ENCODE measurements at regions of chr10 and their contacts with region 1.

Region 1: GRCh38 chr10:93080350-93081046 is 6.8 kb downstream of the CYP26A1 start:
- H3K4me3 Mint-ChIP-seq: no peak overlapping the region
- H3K27ac Mint-ChIP-seq: no peak overlapping the region
- H3K4me1 Mint-ChIP-seq: peaks cover 5% of the 10 kb centered on the region
- H3K27me3 Mint-ChIP-seq: peaks cover 66% of the 10 kb centered on the region

Region 2: DNA sequence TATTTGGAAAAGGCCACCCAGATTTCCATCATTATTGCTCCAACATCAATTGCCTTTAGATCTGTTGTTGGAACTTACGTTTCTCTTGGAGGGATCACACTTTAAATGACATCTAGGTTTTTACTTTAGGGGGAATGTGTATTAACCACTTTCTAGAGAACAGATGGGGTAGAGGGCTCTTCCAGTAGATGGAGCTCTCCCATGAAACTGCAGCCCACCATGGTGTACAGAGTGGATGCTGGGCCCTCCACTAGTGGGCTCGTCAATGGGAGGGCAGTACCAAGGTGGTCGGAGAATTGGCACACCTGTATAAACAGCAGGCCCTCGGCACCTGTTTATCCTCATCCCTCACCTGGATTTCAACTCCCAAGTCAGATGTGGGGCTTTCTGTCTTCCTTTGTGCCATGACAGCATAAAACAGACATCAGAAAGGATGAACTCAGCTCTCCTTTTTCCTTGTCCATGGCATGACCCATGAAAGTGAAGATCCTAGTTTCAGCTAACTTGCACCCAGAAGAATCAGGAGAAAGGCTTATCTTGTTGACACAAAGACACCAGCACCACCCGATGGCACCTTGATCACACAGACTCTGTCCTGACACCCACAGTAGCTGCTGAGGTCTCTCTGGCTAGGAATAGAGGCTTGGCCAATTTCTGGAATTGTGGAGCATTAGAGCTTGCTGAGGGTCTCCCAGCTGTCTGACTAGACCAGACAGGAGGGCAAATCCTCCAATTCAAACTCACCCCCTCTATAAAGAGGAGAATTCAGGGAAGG is 143.7 kb after region 1 on chr10:
- intact Hi-C with region 1: loop called (anchors 2 kb)
- H3K4me3 Mint-ChIP-seq: no peak overlapping the region
- H3K27ac Mint-ChIP-seq: no peak overlapping the region
- H3K4me1 Mint-ChIP-seq: no peaks in the 10 kb centered on the region
- H3K27me3 Mint-ChIP-seq: peaks cover 47% of the 10 kb centered on the region

Region 3: GRCh38 chr10:93288654-93289634 is 208.4 kb after region 1 on chr10:
- intact Hi-C with region 1: loop called (anchors 1 kb)
- H3K4me3 Mint-ChIP-seq: no peak overlapping the region
- H3K27ac Mint-ChIP-seq: no peak overlapping the region
- H3K4me1 Mint-ChIP-seq: peaks cover 8% of the 10 kb centered on the region
- H3K27me3 Mint-ChIP-seq: peaks cover 8% of the 10 kb centered on the region

Region 4: DNA sequence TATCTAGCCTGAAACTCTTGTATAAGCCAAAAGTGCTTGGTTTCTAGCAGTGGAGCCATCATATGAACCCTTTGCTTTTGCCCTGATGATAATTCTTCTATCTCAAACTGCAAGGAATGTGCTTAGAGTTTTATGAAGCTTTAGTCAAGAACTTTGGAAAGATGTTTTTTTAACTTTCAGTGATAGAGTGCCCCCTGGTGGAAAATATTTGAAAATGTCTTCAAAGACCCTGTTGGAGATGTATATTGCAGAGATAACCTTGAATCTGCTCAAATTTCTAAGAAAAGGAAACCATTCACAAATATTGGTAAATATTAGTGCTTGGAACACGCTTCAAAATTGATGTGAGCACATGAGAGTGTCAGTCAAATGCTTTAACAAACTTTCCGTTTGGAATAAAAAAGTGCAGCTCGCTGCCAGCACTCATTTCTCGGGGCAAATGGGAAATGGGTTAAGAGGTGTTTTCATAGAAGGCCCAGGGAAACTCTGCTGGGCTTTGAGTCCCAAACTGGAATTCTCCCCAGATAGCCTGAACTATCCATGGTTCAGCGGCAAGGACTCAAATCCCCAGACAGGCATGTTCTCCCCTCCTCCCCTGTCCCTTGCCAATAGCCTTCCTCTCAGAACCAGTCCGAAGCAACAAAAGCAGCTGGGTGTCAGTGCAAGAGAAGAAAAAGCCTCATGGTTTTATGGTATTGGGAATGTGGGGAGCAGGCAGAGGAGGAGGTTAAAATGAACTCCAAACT is 272.3 kb after region 1 on chr10:
- intact Hi-C with region 1: loop called (anchors 1 kb)
- H3K4me3 Mint-ChIP-seq: no peak overlapping the region
- H3K27ac Mint-ChIP-seq: no peak overlapping the region
- H3K4me1 Mint-ChIP-seq: peaks cover 2% of the 10 kb centered on the region
- H3K27me3 Mint-ChIP-seq: no peaks in the 10 kb centered on the region

Region 5: DNA sequence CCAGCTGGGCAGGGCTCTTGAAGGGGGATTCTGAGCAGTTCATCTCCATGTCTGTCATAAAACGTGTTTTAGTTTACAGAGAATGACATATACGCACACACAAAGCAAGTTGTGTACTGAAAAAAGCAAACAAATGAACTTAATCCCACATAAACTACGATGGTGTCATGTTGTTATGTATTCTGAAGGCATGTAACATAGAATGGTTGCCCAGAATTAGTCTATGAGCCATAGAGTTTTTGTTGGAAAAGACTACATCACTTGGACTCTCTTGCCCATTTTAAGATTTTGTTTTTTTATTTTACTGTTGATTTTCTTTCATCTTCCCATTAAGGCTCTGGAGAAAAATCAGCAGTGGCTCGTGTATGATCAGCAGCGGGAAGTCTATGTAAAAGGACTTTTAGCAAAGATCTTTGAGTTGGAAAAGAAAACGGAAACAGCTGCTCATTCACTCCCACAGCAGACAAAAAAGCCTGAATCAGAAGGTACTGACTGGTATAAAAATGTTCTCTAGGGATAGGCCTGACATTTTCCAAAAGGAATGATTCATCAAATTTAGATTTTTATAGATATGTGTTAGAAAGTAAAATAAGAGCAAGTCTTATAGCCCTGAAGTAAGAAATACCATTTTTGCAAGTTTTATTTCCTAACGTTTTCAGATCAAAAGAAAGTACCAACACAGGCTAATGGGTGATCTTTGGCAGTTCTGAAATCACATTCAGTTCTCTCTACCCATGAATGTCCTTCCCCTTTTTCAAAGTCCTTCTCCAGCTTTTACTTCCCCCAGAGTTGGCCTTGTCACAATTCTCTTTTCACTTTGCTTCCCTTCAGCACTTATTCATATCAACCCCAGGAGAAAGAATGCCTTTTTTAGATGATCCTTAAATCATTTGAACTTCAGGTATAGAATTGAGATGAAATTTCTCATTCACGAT is 434.8 kb after region 1 on chr10:
- intact Hi-C with region 1: loop called (anchors 10 kb)
- H3K4me3 Mint-ChIP-seq: peak overlapping the region; percentile 46
- H3K27ac Mint-ChIP-seq: peak overlapping the region; percentile 92
- H3K4me1 Mint-ChIP-seq: peaks cover 40% of the 10 kb centered on the region
- H3K27me3 Mint-ChIP-seq: no peaks in the 10 kb centered on the region

Measured in dendritic cell treated with granulocyte-macrophage colony-stimulating factor and Interleukin-4, amounts not matched to agents 40 ng/mL and 50 ng/mL, for 4 days (primary cell).